HEK293 (cell line): ENCODE measurements at regions of chr12 and their contacts with region 1.

Region 1: DNA sequence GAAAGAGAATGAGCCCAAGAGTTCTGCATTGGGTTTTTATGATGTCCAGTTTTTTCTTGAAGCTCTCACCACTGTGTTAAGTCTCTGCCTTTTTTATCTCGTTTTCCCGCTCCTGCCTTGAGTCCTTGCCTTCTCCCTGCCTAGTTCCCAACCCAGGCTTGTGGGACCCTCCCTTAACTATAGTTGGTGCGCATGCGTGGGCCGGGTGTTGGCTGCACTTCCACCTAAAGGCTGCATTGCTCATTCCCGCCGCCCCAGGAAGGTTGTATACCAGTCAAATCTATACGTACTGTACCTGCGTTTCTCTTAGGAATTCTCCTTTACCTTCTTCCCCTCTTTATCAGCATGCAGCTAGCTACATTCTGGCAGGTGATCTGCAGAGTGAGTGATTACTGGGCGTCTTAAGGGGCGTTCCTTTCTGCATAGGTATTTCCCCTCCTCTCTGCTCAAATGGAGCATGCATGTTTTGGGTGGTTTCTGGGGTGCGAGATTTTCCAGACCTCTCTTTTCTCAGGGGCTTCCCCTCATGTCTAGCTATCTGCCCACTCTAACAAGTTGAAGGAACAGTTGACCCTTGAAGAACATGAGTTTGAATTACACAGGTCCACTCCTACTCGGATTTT is 6.6 kb upstream of the REP15 start:
- H3K4me3 ChIP-seq: no peak overlapping the region
- H3K27ac ChIP-seq: no peak overlapping the region
- H3K4me1 ChIP-seq: no peaks in the 10 kb centered on the region
- CTCF ChIP-seq: no peak

Region 2: GRCh38 chr12:27703710-27704452 is 14.2 kb after region 1 on chr12:
- CTCF ChIA-PET with region 1: interaction called, 20 read pairs
- POLR2A ChIA-PET with region 1: interaction called, 3 read pairs
- H3K4me3 ChIP-seq: no peak overlapping the region
- H3K27ac ChIP-seq: no peak overlapping the region
- H3K4me1 ChIP-seq: no peaks in the 10 kb centered on the region
- CTCF ChIP-seq: peak; percentile 29; the same call in 1 of the 2 replicates